ENCODE measurements at regions of chr13 and their contacts with region 1.

Region 1: GRCh38 chr13:39037880-39038568 is at the starts of genes NHLRC3 and PROSER1:
- DNase-seq: peak; percentile 94 to 99 (median 96)

Region 2: DNA sequence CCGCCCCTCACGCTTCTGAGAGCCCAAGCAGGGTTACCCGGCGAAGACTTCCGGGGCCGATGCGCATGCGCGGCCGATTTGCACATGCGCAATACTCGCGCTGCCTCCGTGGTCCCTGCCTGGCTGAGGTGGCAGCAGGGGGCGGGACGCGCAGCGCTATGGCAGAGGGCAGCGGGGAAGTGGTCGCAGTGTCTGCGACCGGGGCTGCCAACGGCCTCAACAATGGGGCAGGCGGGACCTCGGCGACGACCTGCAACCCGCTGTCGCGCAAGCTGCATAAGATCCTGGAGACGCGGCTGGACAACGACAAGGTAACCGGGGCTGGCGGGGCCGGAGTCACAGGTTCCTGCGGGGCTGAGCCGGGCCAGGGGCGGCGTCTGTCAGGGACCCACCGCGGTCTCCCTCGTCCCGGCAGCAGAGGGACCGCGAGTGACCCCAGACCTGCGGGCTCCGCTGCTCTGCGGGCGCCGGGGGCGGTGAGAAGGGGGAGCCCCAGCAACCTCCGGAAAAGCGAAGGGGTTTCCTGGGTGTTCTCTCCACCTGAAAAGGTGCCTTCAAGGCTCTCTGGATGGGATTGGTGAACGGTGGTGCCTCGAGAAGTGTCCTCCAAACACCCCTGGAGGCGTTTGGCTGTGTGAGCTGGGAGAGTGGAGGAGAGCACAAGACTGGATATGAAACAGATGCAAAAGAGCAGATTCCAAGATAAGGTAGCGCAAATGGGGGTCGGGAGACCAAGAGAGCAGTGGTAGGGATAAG is 617.7 kb after region 1 on chr13 and contains the start of gene COG6:
- intact Hi-C with region 1: loop called (anchors 5 kb)
- DNase-seq: peak; percentile 88 to 98 (median 93)

Measured in posterior cingulate gyrus (tissue), 11 donors.